Natural killer cell (primary cell): ENCODE measurements at regions of chr15 and their contacts with region 1.

Region 1: GRCh38 chr15:71743861-71744382 is 66.4 kb upstream of the NR2E3 start:
- DNase-seq: peak in 1 of 2 donors; percentile 78
- ATAC-seq: peak in 2 of 3 donors; percentile 42 to 60
- H3K4me3 ChIP-seq: no peak overlapping the region
- H3K4me3 Mint-ChIP-seq: no peak overlapping the region
- H3K27ac ChIP-seq: no peak overlapping the region
- H3K27ac Mint-ChIP-seq: no peak overlapping the region
- H3K4me1 ChIP-seq: no peaks in the 10 kb centered on the region
- H3K4me1 Mint-ChIP-seq: no peaks in the 10 kb centered on the region
- H3K27me3 ChIP-seq: no peaks in the 10 kb centered on the region
- H3K27me3 Mint-ChIP-seq: peaks cover 9 to 10% of the 10 kb centered on the region in 2 donors
- CTCF ChIP-seq: peak; percentile 84

Region 2: DNA sequence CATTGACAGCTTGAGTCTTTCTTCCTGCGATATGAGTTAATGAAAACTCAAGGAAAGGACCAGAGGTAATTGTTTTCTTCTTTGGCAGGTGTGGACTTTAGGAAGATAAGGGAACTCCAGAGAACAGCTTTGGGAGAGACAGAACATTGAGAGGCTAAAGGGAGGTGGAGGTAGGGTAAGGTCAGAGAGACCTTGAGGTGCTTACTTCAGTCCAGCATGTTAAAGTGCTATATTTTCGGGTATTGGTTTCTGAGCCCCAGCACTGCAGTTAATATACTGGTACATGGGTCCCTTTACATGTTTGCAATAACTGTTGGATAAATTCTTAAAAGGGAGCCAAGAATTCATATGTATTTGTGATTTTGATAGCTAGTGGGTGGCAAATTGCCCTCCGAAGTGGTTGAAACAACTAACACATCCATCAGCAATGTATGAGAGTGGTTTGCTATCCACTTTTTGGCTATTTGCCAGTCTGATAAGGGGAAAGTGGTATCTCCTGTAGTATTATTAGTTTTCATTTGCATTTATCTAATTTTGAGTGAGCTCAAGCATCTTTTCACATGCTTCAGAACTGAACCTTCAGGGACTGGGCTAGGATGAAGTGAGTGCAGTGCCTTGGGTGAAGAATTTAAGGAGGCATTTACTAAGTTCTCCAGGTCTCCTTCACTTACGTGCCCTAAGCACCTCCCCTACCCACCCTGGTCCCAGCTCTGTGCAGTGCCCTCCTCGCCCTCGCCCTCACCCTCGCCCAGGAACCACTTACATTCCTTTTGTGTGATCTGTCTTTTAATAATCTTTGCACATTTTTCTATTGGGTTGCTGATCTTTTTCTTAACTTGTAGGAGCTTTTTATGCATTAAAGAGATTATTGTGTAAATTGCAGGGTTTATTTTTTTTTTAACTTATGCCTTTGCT is 306.3 kb before region 1 on chr15:
- intact Hi-C with region 1: no loop called
- DNase-seq: no peak
- ATAC-seq: no peak
- H3K4me3 ChIP-seq: no peak overlapping the region
- H3K4me3 Mint-ChIP-seq: no peak overlapping the region
- H3K27ac ChIP-seq: no peak overlapping the region
- H3K27ac Mint-ChIP-seq: no peak overlapping the region
- H3K4me1 ChIP-seq: no peaks in the 10 kb centered on the region
- H3K4me1 Mint-ChIP-seq: no peaks in the 10 kb centered on the region
- H3K27me3 ChIP-seq: no peaks in the 10 kb centered on the region
- H3K27me3 Mint-ChIP-seq: peaks cover 12 to 19% of the 10 kb centered on the region in 2 donors
- CTCF ChIP-seq: no peak

Region 3: GRCh38 chr15:71687902-71688508 is 55.9 kb before region 1 on chr15:
- intact Hi-C with region 1: no loop called
- DNase-seq: no peak
- ATAC-seq: no peak
- H3K4me3 ChIP-seq: no peak overlapping the region
- H3K4me3 Mint-ChIP-seq: no peak overlapping the region
- H3K27ac ChIP-seq: no peak overlapping the region
- H3K27ac Mint-ChIP-seq: no peak overlapping the region
- H3K4me1 ChIP-seq: no peaks in the 10 kb centered on the region
- H3K4me1 Mint-ChIP-seq: no peaks in the 10 kb centered on the region
- H3K27me3 ChIP-seq: no peaks in the 10 kb centered on the region
- H3K27me3 Mint-ChIP-seq: peaks cover 34 to 49% of the 10 kb centered on the region in 2 donors
- CTCF ChIP-seq: no peak

Region 4: GRCh38 chr15:71800835-71801745 is 57.2 kb after region 1 on chr15:
- intact Hi-C with region 1: loop called (anchors 1 kb)
- DNase-seq: peak in 1 of 2 donors; percentile 46
- ATAC-seq: peak in 1 of 3 donors; percentile 24
- H3K4me3 ChIP-seq: no peak overlapping the region
- H3K4me3 Mint-ChIP-seq: no peak overlapping the region
- H3K27ac ChIP-seq: no peak overlapping the region
- H3K27ac Mint-ChIP-seq: no peak overlapping the region
- H3K4me1 ChIP-seq: no peaks in the 10 kb centered on the region
- H3K4me1 Mint-ChIP-seq: peaks cover 0 to 6% of the 10 kb centered on the region in 2 donors
- H3K27me3 ChIP-seq: no peaks in the 10 kb centered on the region
- H3K27me3 Mint-ChIP-seq: peaks cover 15 to 29% of the 10 kb centered on the region in 2 donors
- CTCF ChIP-seq: no peak